ENCODE measurements at regions of chr9 and their contacts with region 1.

Region 1: GRCh38 chr9:121201738-121202533 is at the start of gene RAB14:
- DNase-seq: peak; percentile 99 to 100 (median 100)
- ATAC-seq: peak; percentile 95
- H3K4me3 ChIP-seq: peak within 1 kb of the TSS; percentile 71
- H3K4me3 Mint-ChIP-seq: peak within 1 kb of the TSS; percentile 79 to 100 (median 94)
- H3K27ac ChIP-seq: peak within 1 kb of the TSS; percentile 92
- H3K27ac Mint-ChIP-seq: peak within 1 kb of the TSS; percentile 88 to 98 (median 95)
- H3K4me1 ChIP-seq: peaks cover 24 to 34% of the 10 kb centered on the region in 2 donors
- H3K4me1 Mint-ChIP-seq: peaks cover 33 to 62% (median 50%) of the 10 kb centered on the region in 7 donors
- H3K27me3 ChIP-seq: no peaks in the 10 kb centered on the region
- H3K27me3 Mint-ChIP-seq: peaks cover 0 to 3% (median 0%) of the 10 kb centered on the region in 5 donors
- total RNA-seq, gene RAB14: 43.9 to 66.5 (median 60.7) TPM

Region 2: DNA sequence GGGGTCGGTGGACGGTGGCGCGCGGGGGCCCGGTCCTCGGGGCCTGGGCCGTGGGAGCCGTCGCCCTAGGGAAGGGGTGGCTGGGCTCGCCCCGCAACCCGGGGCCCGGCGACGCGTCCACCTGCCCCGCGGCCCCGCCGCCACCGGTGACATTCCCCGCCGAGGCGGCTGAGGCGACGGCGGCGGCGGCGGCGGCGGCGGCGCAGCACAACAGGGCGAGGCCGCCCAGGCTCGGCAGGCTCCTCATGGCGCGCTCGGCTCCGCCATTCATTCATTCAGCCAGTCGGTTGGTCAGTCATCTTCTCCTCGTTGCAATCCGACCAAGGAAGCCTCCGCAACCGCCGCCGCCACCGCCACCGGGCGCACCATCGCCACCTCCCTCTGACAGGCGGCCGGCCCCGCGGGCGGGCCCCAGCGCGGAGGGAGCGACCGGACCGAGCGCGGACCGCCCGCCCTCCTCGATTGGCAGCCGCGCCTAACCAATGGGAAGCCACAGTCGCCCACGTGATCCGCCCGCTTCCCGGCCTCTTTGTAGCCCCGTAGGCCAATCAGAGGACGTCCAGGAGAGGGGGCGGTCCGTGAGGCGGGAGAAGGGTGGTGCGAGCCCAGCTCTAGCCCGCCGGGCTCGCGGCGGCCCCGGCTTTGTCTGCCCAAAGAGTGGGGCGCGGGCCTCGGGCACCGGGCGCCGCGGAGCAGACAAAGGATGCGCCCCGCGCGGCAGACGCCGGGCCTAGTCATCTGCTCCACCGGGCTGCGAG is 487.7 kb before region 1 on chr9 and contains the start of gene MEGF9:
- CTCF ChIA-PET with region 1: no interaction called
- POLR2A ChIA-PET with region 1: interaction called, 5 read pairs
- intact Hi-C with region 1: loop called (anchors 2 to 5 kb)
- DNase-seq: peak; percentile 90 to 97 (median 94)
- ATAC-seq: peak; percentile 98
- H3K4me3 ChIP-seq: peak within 1 kb of the TSS; percentile 85
- H3K4me3 Mint-ChIP-seq: peak within 1 kb of the TSS; percentile 82 to 98 (median 87)
- H3K27ac ChIP-seq: peak within 1 kb of the TSS; percentile 79
- H3K27ac Mint-ChIP-seq: peak within 1 kb of the TSS; percentile 31 to 98 (median 87)
- H3K4me1 ChIP-seq: peaks cover 22% of the 10 kb centered on the region in 2 donors
- H3K4me1 Mint-ChIP-seq: peaks cover 18 to 43% (median 36%) of the 10 kb centered on the region in 7 donors
- H3K27me3 ChIP-seq: no peaks in the 10 kb centered on the region
- H3K27me3 Mint-ChIP-seq: no peaks in the 10 kb centered on the region
- total RNA-seq, gene MEGF9: 9.5 to 35.4 (median 11.1) TPM

Region 3: DNA sequence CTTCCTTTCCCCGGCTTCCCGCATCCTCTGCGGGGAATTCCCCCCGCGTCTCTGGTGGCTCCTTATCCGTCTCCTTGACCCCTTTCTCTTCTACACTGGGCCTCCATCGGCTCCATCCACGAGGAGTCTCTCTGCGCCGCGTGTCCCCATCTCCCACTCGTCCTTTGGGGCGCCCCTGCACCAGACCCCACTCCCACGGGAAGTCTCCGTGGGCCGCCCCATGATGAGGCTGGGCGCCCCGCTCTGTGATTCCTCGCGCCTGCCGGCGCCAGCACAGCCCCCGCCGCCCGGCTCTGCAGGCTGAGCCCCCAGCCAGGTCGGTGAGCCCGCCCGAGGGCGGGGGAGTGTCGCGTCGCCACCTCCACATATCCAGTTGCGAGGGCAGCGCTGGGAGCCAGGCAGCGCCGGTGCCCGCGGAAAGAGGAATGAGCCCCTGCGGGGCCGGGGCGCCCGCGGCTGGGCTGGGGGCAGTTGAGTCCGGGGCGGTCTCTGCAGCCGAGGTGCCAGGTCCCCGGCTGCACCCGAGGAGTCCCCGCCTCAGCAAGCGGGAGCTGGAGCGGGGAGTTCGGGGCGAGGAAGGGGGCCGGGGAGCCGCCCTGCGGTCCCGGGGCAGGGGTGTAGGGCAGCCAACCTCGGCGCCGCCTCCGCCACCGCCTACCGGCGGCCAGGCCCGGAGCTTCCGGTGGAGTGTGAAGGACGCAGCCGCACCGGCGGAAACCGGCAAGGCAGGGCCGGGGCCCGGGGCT is 273.3 kb before region 1 on chr9:
- CTCF ChIA-PET with region 1: no interaction called
- POLR2A ChIA-PET with region 1: interaction called, 3 read pairs
- intact Hi-C with region 1: loop called in 1 of 2 experiments (anchors 5 kb)
- DNase-seq: peak; percentile 63 to 86 (median 74)
- ATAC-seq: peak; percentile 58
- H3K4me3 ChIP-seq: peak overlapping the region; percentile 79
- H3K4me3 Mint-ChIP-seq: peak overlapping the region; percentile 90 to 100 (median 96)
- H3K27ac ChIP-seq: peak overlapping the region; percentile 97
- H3K27ac Mint-ChIP-seq: peak overlapping the region; percentile 95 to 100 (median 99)
- H3K4me1 ChIP-seq: peaks cover 62 to 84% of the 10 kb centered on the region in 2 donors
- H3K4me1 Mint-ChIP-seq: peaks cover 57 to 95% (median 86%) of the 10 kb centered on the region in 7 donors
- H3K27me3 ChIP-seq: no peaks in the 10 kb centered on the region
- H3K27me3 Mint-ChIP-seq: no peaks in the 10 kb centered on the region

Region 4: DNA sequence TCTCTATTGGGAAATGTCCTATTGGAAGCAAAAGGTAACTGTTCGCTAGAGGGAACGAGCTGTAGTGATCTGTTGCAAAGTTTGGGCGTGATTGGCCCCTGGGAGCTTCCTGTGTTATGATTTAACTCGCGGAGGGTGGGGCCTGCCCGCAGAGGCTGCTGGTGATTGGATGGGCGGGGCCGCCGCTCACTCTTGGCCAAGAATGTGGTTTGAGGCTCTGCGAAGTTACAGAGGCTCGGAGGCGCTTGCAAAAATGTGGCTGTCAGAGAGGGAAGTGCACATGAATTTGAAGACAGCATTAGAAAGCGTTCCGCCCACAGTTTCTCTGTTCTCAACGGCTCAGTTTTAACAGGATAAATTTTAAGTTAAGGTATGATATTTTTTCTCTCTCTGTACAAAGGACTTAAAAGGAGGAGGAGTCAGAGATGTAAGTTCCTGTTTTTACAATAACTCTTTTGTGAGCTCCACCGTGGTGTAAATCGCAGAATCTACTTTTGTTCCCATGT is 80.3 kb before region 1 on chr9:
- CTCF ChIA-PET with region 1: no interaction called
- POLR2A ChIA-PET with region 1: interaction called, 16 read pairs
- intact Hi-C with region 1: loop called (anchors 1 kb)
- DNase-seq: peak; percentile 83 to 98 (median 97)
- ATAC-seq: peak; percentile 100
- H3K4me3 ChIP-seq: peak overlapping the region; percentile 87
- H3K4me3 Mint-ChIP-seq: peak overlapping the region; percentile 87 to 96 (median 89)
- H3K27ac ChIP-seq: peak overlapping the region; percentile 88
- H3K27ac Mint-ChIP-seq: peak overlapping the region; percentile 87 to 99 (median 93)
- H3K4me1 ChIP-seq: peaks cover 20 to 26% of the 10 kb centered on the region in 2 donors
- H3K4me1 Mint-ChIP-seq: peaks cover 27 to 63% (median 54%) of the 10 kb centered on the region in 7 donors
- H3K27me3 ChIP-seq: no peaks in the 10 kb centered on the region
- H3K27me3 Mint-ChIP-seq: no peaks in the 10 kb centered on the region

Region 5: GRCh38 chr9:121157939-121158338 is 44.0 kb before region 1 on chr9:
- CTCF ChIA-PET with region 1: no interaction called
- POLR2A ChIA-PET with region 1: no interaction called
- intact Hi-C with region 1: no loop called
- DNase-seq: no peak
- ATAC-seq: no peak
- H3K4me3 ChIP-seq: no peak overlapping the region
- H3K4me3 Mint-ChIP-seq: no peak overlapping the region
- H3K27ac ChIP-seq: no peak overlapping the region
- H3K27ac Mint-ChIP-seq: peak overlapping the region in 5 of 9 donors; percentile 29 to 84 (median 40)
- H3K4me1 ChIP-seq: peaks cover 4 to 5% of the 10 kb centered on the region in 2 donors
- H3K4me1 Mint-ChIP-seq: peaks cover 6 to 45% (median 36%) of the 10 kb centered on the region in 7 donors
- H3K27me3 ChIP-seq: no peaks in the 10 kb centered on the region
- H3K27me3 Mint-ChIP-seq: no peaks in the 10 kb centered on the region

Region 6: DNA sequence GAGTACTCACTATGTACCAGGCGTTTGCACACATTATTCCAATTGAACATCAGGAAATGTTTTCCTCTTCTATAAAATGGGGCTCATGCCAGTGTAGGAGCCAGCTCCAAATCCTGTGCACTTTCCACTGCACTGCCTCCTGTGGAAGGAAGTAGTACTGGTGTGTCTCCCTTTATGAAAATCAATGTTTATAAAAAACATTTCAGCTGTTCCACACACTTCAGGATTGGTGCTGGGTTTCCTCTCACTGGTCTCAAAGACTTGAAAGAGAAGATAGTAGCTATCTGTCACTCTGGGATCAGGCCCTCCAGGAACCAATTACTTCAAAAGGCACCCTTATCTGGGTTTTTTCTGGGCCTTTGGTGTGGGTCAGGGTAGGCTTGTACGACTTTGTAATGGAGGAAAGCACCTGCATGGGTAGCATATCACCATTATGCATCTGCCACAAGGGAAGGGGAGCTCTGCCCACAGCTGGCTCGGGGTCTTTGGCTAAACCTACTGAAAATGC is 32.8 kb before region 1 on chr9:
- CTCF ChIA-PET with region 1: interaction called, 4 read pairs
- POLR2A ChIA-PET with region 1: interaction called, 9 read pairs
- intact Hi-C with region 1: loop called in 1 of 2 experiments (anchors 5 kb)
- DNase-seq: peak in 7 of 9 donors; percentile 20 to 46 (median 41)
- ATAC-seq: peak; percentile 85
- H3K4me3 ChIP-seq: no peak overlapping the region
- H3K4me3 Mint-ChIP-seq: peak overlapping the region in 7 of 10 donors; percentile 21 to 70 (median 53)
- H3K27ac ChIP-seq: peak overlapping the region; percentile 67
- H3K27ac Mint-ChIP-seq: peak overlapping the region; percentile 38 to 94 (median 84)
- H3K4me1 ChIP-seq: peaks cover 0 to 23% of the 10 kb centered on the region in 2 donors
- H3K4me1 Mint-ChIP-seq: peaks cover 10 to 29% (median 25%) of the 10 kb centered on the region in 7 donors
- H3K27me3 ChIP-seq: no peaks in the 10 kb centered on the region
- H3K27me3 Mint-ChIP-seq: no peaks in the 10 kb centered on the region

Region 7: GRCh38 chr9:121213136-121213806 is 11.3 kb after region 1 on chr9:
- CTCF ChIA-PET with region 1: interaction called, 10 read pairs
- POLR2A ChIA-PET with region 1: interaction called, 20 read pairs
- intact Hi-C with region 1: no loop called
- DNase-seq: peak; percentile 19 to 69 (median 51)
- ATAC-seq: peak; percentile 87
- H3K4me3 ChIP-seq: no peak overlapping the region
- H3K4me3 Mint-ChIP-seq: no peak overlapping the region
- H3K27ac ChIP-seq: no peak overlapping the region
- H3K27ac Mint-ChIP-seq: peak overlapping the region in 4 of 9 donors; percentile 7 to 49 (median 19)
- H3K4me1 ChIP-seq: no peaks in the 10 kb centered on the region
- H3K4me1 Mint-ChIP-seq: peaks cover 0 to 20% (median 11%) of the 10 kb centered on the region in 7 donors
- H3K27me3 ChIP-seq: no peaks in the 10 kb centered on the region
- H3K27me3 Mint-ChIP-seq: no peaks in the 10 kb centered on the region

Region 8: DNA sequence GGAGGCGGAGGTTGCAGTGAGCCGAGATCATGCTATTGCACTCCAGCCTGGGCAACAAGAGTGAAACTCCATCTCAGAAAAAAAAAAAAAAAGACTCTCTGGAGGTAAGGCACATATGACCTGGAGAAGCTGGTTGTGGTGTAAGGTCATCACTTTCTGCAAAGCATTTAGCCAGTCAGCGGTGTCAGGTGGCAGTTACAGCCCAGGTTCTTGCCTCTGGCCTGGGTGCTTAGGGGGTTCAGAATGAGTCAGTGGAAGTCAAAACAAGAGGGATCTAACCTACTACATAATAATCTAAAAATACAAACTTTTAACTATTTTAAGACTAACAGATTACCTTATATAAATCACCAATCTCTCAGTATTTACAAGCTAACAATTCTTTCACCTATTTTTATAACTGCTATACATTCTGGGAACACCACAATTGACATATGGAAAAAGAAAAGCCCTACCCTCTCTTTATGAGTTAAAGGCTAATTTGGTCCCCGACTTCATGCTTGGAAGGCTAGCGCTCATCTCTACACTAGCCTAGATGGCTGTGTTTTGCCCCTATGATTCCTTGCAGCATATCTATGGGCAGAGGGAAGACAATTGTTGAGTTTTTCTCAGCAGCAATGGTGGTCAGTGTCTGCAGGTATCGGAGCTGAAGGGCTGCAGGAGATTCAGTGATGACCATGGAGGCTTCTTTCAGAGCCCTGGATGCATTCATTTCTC is 138.9 kb after region 1 on chr9:
- CTCF ChIA-PET with region 1: no interaction called
- POLR2A ChIA-PET with region 1: no interaction called
- intact Hi-C with region 1: no loop called
- DNase-seq: no peak
- ATAC-seq: no peak
- H3K4me3 ChIP-seq: no peak overlapping the region
- H3K4me3 Mint-ChIP-seq: no peak overlapping the region
- H3K27ac ChIP-seq: no peak overlapping the region
- H3K27ac Mint-ChIP-seq: peak overlapping the region in 1 of 9 donors; percentile 67
- H3K4me1 ChIP-seq: no peaks in the 10 kb centered on the region
- H3K4me1 Mint-ChIP-seq: peaks cover 0 to 11% (median 0%) of the 10 kb centered on the region in 7 donors
- H3K27me3 ChIP-seq: no peaks in the 10 kb centered on the region
- H3K27me3 Mint-ChIP-seq: no peaks in the 10 kb centered on the region

Region 9: DNA sequence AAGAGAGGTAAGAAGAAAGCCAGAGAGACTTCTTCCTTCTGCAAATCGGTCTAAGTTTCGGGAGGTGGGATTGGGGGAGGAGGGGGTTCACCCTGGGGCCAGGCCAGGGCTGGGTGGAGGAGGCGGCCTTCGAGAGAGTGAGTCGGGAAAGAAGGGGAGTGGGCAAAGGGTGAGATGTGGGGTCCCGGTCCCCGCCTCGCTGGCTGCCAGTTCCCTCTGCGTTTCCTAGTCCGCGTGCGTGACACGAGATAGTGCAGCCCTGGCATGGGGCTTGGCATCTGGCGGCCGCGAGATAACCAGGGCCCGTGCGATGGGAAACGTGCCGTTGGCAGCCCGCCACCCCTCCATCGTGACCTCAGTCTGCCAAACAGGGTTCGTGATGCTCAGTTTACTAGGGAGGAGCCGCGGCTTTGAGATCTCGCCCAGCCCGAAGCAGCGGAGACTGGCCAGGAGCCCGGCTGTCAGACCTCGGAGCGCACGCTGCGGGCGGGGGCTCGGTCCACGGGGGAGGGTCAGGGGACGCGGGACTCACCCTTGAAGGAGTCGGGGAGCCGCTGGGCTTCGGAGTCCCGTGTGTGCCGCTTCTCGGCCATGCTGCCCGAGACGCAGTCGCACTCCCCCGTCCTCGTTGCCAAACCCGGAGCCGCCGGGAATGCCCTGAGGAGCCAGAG is 167.8 kb after region 1 on chr9 and contains the start of gene STOM:
- CTCF ChIA-PET with region 1: interaction called, 5 read pairs
- POLR2A ChIA-PET with region 1: no interaction called
- intact Hi-C with region 1: loop called (anchors 1 to 5 kb)
- DNase-seq: peak in 3 of 9 donors; percentile 60 to 66 (median 65)
- ATAC-seq: peak; percentile 58
- H3K4me3 ChIP-seq: peak within 1 kb of the TSS; percentile 91
- H3K4me3 Mint-ChIP-seq: peak within 1 kb of the TSS; percentile 88 to 99 (median 94)
- H3K27ac ChIP-seq: peak within 1 kb of the TSS; percentile 76
- H3K27ac Mint-ChIP-seq: peak within 1 kb of the TSS; percentile 87 to 99 (median 96)
- H3K4me1 ChIP-seq: peaks cover 18 to 24% of the 10 kb centered on the region in 2 donors
- H3K4me1 Mint-ChIP-seq: peaks cover 22 to 57% (median 36%) of the 10 kb centered on the region in 7 donors
- H3K27me3 ChIP-seq: no peaks in the 10 kb centered on the region
- H3K27me3 Mint-ChIP-seq: no peaks in the 10 kb centered on the region
- total RNA-seq, gene STOM: 8.8 to 59.8 (median 16.1) TPM